Activated T-helper 1 cell treated with anti-CD3 and anti-CD28 coated beads, Interleukin-12 subunit alpha, Interleukin-12 subunit beta, Interleukin-2, Interleukin-4 antibody, amounts not matched to agents 30 ng/mL and 10 ng/mL and 1 ng/mL, durations not matched to agents 14 hours and 24 hours and 36 hours (primary cell): ENCODE measurements at regions of chr14 and their contacts with region 1.

Region 1: DNA sequence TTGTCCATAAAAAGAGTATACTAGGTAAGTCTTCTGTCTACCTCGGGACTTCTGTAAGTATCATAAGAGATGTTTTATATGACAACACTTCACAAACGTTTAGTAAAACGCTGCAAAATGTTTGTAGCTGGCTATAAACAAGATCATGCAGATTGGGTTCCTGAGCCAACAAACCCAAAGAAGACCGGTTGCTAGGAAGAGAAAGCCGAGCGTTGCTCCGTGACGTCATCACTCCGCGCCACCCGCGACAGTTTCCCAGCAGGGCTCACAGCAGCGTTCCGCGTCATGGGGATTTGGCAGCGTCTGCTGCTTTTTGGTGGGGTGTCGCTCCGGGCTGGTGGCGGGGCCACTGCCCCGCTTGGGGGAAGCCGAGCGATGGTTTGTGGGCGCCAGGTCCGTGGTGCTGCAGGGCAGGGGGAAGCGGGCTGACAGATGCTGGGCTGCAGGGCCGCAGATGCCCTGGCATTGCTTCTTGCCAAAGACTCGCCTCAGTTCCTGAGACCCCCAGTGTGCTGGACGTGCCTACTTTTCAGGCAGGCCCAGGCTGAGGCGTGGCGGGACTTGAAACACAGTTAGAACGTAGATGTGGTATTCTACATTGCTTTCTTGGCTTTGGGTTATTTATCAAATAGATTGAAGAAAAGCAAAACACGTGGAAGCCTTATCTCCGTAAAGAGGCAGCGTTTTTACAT is at the start of gene NUBPL:
- DNase-seq: peak; percentile 95
- H3K4me3 Mint-ChIP-seq: peak within 1 kb of the TSS; percentile 94
- H3K27ac Mint-ChIP-seq: peak within 1 kb of the TSS; percentile 98
- H3K4me1 Mint-ChIP-seq: peaks cover 23% of the 10 kb centered on the region
- H3K27me3 Mint-ChIP-seq: peaks cover 16% of the 10 kb centered on the region
- total RNA-seq, gene NUBPL: 12.0 and 13.7 TPM in 2 replicates

Region 2: DNA sequence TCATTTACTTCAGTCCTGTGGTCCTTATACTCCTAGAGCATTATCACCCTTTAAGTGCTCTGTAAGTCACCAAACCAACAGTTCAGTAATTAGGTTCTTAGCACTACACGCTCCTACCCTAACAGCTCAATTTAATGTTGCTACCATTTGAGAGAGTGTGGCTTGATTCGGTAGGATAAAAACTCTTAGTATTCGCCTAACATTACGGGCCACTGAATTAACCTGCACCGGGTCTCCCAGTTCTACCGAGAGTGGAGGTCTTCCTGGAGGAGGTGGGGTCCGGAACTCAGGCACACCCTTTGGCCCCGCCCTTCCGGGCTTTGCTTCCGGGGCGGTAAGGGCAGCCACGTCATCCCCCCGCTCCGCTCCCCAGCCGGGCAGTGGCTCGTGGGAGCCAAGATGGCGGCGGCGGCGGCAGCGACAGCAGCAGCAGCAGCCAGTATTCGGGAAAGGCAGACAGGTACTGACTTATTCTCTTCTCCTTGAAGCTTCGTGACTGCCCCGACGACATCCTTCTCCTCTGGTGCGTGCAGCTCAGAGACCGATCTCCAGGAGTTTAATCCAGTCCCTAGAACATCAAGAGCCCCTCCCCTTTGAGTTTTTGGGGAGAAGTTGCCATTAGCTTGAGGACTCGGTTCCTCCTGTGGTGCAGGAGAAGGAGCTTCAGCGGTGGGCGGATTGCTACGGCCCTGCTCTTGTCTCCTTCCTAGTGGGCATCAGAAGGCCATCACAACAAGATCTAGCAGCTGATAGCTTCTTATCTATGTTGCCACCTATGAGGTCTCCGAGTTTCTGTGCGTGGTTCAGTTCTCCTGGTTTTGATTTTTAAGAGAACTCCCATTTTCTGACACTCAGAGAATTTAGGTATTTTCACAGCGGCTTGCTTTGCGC is 939.1 kb before region 1 on chr14 and contains the start of gene SCFD1:
- intact Hi-C with region 1: loop called (anchors 5 kb)
- DNase-seq: peak; percentile 94
- H3K4me3 Mint-ChIP-seq: peak within 1 kb of the TSS; percentile 99
- H3K27ac Mint-ChIP-seq: peak within 1 kb of the TSS; percentile 98
- H3K4me1 Mint-ChIP-seq: peaks cover 56% of the 10 kb centered on the region
- H3K27me3 Mint-ChIP-seq: no peaks in the 10 kb centered on the region
- total RNA-seq, gene SCFD1: 73.1 and 77.3 TPM in 2 replicates

Region 3: GRCh38 chr14:31420319-31421111 is 140.8 kb before region 1 on chr14 and contains the start of gene HEATR5A:
- intact Hi-C with region 1: loop called (anchors 1 kb)
- DNase-seq: peak; percentile 92
- H3K4me3 Mint-ChIP-seq: peak within 1 kb of the TSS; percentile 98
- H3K27ac Mint-ChIP-seq: peak within 1 kb of the TSS; percentile 90
- H3K4me1 Mint-ChIP-seq: peaks cover 26% of the 10 kb centered on the region
- H3K27me3 Mint-ChIP-seq: peaks cover 2% of the 10 kb centered on the region
- total RNA-seq, gene HEATR5A: 26.4 and 31.0 TPM in 2 replicates

Region 4: DNA sequence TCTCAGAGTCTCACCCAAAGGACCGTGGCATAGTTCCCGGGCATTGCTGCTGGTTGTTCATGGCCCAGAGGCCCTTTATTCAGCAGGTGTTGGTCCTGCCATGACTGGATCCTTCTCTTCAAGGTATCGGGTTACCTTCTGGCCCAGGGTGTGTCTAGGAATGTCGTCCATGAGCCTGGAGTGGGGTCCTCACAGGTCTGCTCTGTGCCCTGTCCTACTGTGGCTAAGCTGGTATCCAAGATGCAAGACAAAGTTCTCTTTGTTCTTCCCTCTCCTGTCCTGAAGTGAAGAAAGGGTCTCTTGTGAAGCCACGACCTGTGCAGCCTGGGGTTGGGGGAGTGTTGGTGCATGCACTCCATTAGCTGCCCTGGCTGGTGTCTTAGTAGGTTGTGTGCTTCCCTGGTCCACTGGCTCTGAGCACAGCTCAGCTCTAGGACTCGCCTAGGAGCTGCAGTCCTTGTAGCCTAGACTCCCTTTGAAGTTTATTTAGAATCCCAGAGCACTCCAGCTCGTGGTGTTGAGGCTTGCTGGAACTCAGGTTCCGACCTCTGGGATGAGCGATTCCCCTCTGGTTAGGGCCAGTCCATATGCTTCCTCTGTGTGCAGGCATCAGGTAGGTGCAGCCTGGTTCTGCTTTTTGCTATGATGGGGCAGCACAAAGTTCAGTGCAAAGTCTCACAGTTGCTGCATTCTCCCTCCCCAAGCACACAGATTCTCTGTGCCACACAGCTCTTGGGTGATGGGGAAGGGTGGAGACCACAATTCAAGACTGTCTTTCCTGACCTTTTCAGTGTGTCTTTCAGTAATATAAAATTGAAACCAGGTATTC is 117.3 kb after region 1 on chr14:
- intact Hi-C with region 1: no loop called
- DNase-seq: no peak
- H3K4me3 Mint-ChIP-seq: no peak overlapping the region
- H3K27ac Mint-ChIP-seq: no peak overlapping the region
- H3K4me1 Mint-ChIP-seq: no peaks in the 10 kb centered on the region
- H3K27me3 Mint-ChIP-seq: no peaks in the 10 kb centered on the region

Region 5: DNA sequence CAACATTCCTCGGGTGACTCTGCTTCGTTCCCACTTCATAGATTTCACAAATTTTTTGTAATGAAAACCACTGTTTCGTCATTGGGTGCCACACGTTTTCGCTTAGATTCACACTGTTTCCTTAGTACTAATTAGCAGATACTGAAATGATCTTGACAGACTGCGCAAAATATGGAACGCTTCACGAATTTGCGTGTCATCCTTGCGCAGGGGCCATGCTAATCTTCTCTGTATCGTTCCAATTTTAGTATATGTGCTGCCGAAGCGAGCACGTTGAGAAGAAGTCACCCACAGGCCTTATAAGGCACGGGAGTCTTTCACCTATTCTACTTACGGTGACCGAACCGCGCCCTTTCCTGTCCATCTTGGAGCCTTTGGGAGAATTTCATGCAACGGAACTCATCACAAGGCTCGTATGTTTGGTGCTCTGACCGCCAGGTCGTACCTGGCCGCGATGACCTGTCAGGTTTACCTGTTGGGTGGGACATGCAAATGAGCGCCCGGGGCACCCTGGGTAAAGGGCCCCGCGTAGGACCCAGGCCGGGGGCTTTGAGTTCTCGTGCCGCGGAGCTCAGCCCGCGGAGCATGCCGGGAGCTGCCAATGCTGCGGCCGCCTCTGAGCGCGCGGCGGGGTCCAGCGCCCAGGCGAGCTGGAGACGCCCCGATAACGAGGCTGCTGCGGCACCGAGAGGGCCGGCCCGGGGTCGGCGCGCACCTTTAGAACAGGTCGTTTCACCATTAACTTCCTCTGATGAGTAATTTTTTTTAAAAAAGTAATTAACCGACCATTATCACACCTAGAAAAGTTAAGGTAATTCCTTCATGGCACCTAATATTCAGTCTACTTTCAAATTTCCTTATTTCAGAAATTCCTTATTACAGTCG is 641.9 kb after region 1 on chr14 and contains the start of gene RNU6-8:
- intact Hi-C with region 1: loop called (anchors 5 kb)
- DNase-seq: peak; percentile 78
- H3K4me3 Mint-ChIP-seq: peak within 1 kb of the TSS; percentile 87
- H3K27ac Mint-ChIP-seq: peak within 1 kb of the TSS; percentile 91
- H3K4me1 Mint-ChIP-seq: peaks cover 49% of the 10 kb centered on the region
- H3K27me3 Mint-ChIP-seq: peaks cover 2% of the 10 kb centered on the region
- total RNA-seq, gene RNU6-8: not detected in 2 replicates